Activated CD8-positive, alpha-beta memory T cell treated with anti-CD3 and anti-CD28 coated beads, Interleukin-2, amount 10 ng/mL, durations not matched to agents 7 days and 5 days (primary cell): ENCODE measurements at regions of chr1 and their contacts with region 1.

Region 1: DNA sequence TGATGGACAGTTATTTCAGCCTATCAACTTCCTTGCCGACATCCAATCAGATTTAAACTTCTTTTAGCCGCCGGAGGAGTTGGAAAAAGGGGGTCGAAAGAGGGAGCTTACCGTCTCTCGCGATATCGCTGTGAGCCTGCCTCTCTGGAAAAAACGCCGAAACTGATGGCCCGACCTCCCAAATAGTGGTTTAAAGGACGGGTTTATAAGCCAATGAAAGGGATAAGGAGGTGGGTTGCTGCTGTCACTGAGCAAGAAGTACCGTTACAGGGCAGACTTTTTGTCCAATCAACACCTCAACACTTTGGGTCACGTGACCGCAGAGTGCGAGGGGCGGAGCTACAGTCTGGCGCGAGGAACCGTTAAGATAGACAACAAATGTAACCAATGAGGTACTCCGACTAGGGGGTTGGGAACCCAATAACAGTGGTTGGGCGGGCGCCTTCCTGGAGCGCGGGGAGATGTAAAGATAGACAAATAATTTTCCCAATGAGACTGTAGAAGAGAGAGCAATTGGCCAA is at the start of gene RBM15:
- DNase-seq: peak; percentile 99
- ATAC-seq: peak; percentile 80
- H3K4me3 Mint-ChIP-seq: no peak within 1 kb of the TSS
- H3K27ac Mint-ChIP-seq: no peak within 1 kb of the TSS
- H3K4me1 Mint-ChIP-seq: peaks cover 49% of the 10 kb centered on the region
- H3K27me3 Mint-ChIP-seq: no peaks in the 10 kb centered on the region
- total RNA-seq, gene RBM15: 76.5 to 122 TPM

Region 2: DNA sequence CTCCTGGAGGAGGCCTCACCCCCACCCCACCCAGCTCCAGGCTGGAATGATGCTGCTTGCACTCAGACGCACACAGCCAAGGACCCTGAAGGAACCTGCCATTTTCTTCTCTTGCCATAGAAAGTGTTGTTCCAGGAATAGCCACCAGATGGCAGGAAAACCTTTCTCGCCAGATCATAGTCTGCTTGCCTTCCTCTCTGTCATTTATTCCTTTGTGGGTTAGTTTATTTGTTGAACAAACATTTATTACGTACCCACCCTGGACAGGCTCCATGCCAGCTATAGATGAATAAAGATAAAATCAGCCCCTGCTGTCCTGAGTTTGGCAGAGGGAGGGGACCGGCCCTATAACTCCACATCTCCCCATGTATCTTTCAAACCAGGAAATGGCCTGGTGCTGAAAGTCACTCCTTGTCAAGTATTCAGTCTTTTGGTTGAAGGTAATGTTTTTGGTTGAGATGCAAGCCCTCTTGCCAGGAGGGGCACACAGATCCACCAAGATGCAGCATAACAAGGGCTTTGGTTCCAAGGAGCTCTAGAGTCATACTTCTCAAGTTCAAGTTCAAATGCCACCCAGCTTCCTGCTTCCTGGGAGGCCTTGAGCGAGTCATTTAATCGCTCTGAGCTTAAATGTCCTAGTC is 135.8 kb before region 1 on chr1:
- CTCF ChIA-PET with region 1: interaction called, 97 read pairs
- DNase-seq: peak; percentile 82
- ATAC-seq: peak; percentile 64
- H3K4me3 Mint-ChIP-seq: no peak overlapping the region
- H3K27ac Mint-ChIP-seq: peak overlapping the region; percentile 86
- H3K4me1 Mint-ChIP-seq: peaks cover 15% of the 10 kb centered on the region
- H3K27me3 Mint-ChIP-seq: no peaks in the 10 kb centered on the region

Region 3: DNA sequence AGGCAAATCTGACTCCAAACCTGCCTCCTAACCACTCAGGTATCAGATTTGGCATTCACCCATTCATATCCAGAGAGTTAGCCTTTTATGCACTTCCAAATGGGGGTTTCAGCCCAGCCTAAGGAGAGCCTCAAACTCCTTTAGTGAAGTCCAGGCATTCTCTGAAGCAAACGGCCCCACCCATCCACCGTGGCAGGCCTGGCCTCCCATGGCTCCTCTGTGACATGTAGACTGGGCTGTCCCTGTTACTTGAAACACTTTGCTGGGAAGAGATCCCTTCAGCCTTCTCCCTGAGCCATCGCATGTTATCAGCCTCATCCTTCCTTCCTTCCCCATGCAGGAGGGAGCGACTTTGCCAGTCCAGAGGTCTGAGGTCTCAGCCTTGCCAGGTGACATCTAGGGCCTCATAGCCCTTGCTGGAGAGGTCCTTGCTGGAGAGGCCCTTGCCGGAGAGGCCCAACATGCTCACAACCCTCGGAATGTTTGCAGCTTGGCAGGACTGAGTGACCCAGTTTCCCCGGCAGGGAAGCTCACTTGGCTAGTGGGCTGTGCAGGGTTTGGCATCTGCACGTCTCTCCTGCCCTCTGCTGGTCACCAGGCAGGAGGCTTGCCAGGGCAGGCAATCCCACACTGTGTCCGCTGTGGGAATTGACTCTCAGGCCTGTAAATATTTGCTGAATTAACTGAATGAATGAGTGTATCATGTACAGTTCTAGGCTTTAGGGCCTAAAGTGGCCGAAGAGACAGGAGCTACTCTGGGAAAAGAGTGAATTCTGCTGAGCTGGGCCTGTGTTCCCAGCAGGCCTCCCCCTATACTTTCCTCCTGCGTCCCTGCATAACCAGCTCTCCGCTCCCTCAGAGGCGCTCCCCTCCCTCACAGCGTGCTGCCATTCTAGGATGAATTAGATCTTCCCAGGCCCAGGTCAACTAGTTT is 26.5 kb before region 1 on chr1:
- CTCF ChIA-PET with region 1: interaction called, 10 read pairs
- DNase-seq: peak; percentile 76
- ATAC-seq: peak; percentile 96
- H3K4me3 Mint-ChIP-seq: no peak overlapping the region
- H3K27ac Mint-ChIP-seq: no peak overlapping the region
- H3K4me1 Mint-ChIP-seq: no peaks in the 10 kb centered on the region
- H3K27me3 Mint-ChIP-seq: no peaks in the 10 kb centered on the region

Region 4: GRCh38 chr1:110356405-110356804 is 17.5 kb after region 1 on chr1:
- CTCF ChIA-PET with region 1: interaction called, 11 read pairs
- DNase-seq: no peak
- ATAC-seq: no peak
- H3K4me3 Mint-ChIP-seq: no peak overlapping the region
- H3K27ac Mint-ChIP-seq: no peak overlapping the region
- H3K4me1 Mint-ChIP-seq: peaks cover 31% of the 10 kb centered on the region
- H3K27me3 Mint-ChIP-seq: no peaks in the 10 kb centered on the region

Region 5: GRCh38 chr1:110407260-110408210 is 68.6 kb after region 1 on chr1 and contains the start of gene LAMTOR5:
- CTCF ChIA-PET with region 1: interaction called, 29 read pairs
- DNase-seq: peak; percentile 96
- ATAC-seq: peak; percentile 95
- H3K4me3 Mint-ChIP-seq: peak within 1 kb of the TSS; percentile 98
- H3K27ac Mint-ChIP-seq: peak within 1 kb of the TSS; percentile 98
- H3K4me1 Mint-ChIP-seq: peaks cover 25% of the 10 kb centered on the region
- H3K27me3 Mint-ChIP-seq: no peaks in the 10 kb centered on the region
- total RNA-seq, gene LAMTOR5: 109 to 130 TPM

Region 6: DNA sequence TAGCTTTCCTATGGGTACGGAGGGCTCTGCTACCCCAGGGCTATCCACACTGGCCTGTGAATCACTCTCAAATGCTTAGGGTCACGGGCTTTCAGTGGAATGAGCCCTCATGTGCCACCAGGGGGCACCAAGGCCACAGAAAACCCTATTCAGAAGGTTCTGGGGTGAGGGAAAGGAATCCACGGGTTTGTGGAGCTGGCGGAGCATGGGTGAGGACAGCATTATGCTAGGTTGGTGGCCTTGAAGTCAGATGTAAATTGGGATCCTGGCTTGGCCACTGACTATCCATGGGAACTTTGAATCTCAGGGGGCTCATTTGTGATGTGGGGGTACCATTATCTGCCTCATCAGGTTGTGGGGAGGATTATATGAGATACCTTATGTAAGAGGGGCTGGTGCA is 73.6 kb after region 1 on chr1:
- CTCF ChIA-PET with region 1: interaction called, 29 read pairs
- DNase-seq: peak; percentile 73
- ATAC-seq: peak; percentile 57
- H3K4me3 Mint-ChIP-seq: no peak overlapping the region
- H3K27ac Mint-ChIP-seq: no peak overlapping the region
- H3K4me1 Mint-ChIP-seq: peaks cover 16% of the 10 kb centered on the region
- H3K27me3 Mint-ChIP-seq: no peaks in the 10 kb centered on the region

Region 7: GRCh38 chr1:110440877-110441276 is 101.9 kb after region 1 on chr1:
- CTCF ChIA-PET with region 1: no interaction called
- DNase-seq: no peak
- ATAC-seq: no peak
- H3K4me3 Mint-ChIP-seq: no peak overlapping the region
- H3K27ac Mint-ChIP-seq: no peak overlapping the region
- H3K4me1 Mint-ChIP-seq: no peaks in the 10 kb centered on the region
- H3K27me3 Mint-ChIP-seq: peaks cover 7% of the 10 kb centered on the region